ENCODE measurements at regions of chr15 and their contacts with region 1.

Region 1: DNA sequence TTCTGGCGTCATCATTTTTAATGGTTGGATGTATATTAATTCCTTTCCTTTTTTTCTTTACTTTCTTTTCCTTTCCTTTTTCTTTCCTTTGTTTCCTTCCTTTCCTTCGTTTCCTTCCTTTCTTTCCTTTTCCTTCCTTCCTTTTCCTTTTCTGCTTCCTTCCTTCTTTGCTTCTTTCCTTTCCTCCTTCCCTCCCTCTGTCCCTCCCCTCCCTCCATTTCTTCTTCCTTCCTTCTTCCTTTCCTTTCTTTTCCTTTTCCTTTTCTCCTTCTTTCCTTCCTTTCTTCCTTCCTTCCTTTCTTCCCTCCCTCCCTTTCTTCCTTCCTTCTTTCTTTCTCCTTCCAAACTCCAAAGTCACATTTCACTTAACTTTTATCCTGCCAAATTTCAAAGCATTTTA is 54.9 kb upstream of the LYSMD4 start:
- DNase-seq: no peak
- ATAC-seq: no peak
- H3K4me3 ChIP-seq: no peak overlapping the region
- H3K27ac ChIP-seq: no peak overlapping the region
- H3K4me1 ChIP-seq: no peaks in the 10 kb centered on the region
- H3K27me3 ChIP-seq: peaks cover 2% of the 10 kb centered on the region; the same call in 1 of the 2 replicates
- CTCF ChIP-seq: no peak
- POLR2A ChIP-seq: no peak
- RAD21 ChIP-seq: no peak

Region 2: GRCh38 chr15:99495430-99496301 is 292.5 kb before region 1 on chr15:
- CTCF ChIA-PET with region 1: no interaction called
- POLR2A ChIA-PET with region 1: no interaction called
- dilution Hi-C with region 1: no loop called
- in situ Hi-C with region 1: no loop called
- intact Hi-C with region 1: no loop called
- DNase-seq: peak; percentile 24
- ATAC-seq: peak; percentile 82
- H3K4me3 ChIP-seq: no peak overlapping the region
- H3K27ac ChIP-seq: peak overlapping the region; percentile 69; the same call in 1 of the 2 replicates
- H3K4me1 ChIP-seq: peaks cover 11% of the 10 kb centered on the region; the same call in 1 of the 2 replicates
- H3K27me3 ChIP-seq: 0 out of 2 replicates have a peak, but pooled peaks cover 2% of the 10 kb centered on the region
- CTCF ChIP-seq: no peak
- POLR2A ChIP-seq: no peak
- RAD21 ChIP-seq: no peak

Region 3: DNA sequence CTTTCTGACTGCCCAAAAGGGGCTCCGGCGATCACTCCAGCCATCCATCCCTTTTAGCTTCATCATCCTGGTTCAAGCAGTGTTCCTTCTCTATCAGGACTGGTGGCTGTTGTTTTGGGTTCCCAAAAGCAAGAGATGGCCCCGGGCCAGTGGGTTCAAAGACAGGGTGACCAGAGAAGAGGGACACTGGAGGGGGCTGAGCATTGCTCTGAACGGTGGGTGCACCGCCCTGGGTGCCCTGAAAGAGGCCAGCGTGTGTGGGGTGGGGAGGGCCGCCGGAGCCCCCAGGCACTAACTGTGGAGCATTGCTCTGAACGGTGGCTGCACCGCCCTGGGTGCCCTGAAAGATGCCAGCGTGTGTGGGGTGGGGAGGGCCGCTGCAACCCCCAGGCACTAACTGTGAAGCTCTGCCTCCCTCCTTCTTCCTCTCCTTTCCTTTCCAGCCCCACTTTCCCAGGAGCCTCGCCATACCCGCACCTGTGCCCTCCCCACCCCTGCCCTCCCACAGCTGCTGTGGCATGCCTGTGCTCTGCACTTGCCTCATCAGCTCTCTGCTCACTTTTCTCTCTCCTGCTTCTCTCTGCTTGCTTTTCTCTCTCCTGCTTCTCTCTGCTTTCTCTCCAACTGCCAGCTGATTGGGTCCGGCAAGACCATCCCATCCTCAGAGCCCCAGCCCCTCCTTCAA is 1977.7 kb after region 1 on chr15:
- CTCF ChIA-PET with region 1: no interaction called
- POLR2A ChIA-PET with region 1: no interaction called
- dilution Hi-C with region 1: no loop called
- in situ Hi-C with region 1: loop called (anchors 10 kb)
- intact Hi-C with region 1: no loop called
- DNase-seq: no peak
- ATAC-seq: no peak
- H3K4me3 ChIP-seq: no peak overlapping the region
- H3K27ac ChIP-seq: no peak overlapping the region
- H3K4me1 ChIP-seq: peaks cover 1% of the 10 kb centered on the region; the same call in 1 of the 2 replicates
- H3K27me3 ChIP-seq: no peaks in the 10 kb centered on the region
- CTCF ChIP-seq: no peak
- POLR2A ChIP-seq: no peak
- RAD21 ChIP-seq: no peak

Measured in IMR-90 (cell line).